Transverse colon (tissue), 4 donors: ENCODE measurements at regions of chr2 and their contacts with region 1.

Region 1: DNA sequence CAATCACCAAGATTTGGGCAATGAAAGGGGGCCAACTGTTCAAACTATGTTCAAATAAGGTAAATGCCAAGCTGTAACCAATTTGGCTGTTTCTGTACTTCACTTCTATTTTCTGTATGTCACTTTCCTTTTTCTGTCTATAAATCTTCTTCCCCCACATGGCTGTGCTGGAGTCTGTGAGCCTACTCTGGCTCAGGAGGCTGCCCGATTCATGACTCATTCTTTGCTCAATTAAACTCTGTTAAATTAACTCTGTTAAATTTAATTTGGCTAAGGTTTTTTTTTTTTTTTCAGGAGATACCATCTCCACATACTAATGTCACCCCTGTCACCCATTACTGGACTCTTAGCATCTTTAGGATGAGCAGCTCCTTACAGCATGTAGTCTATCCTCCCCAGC is 178.8 kb upstream of the TWIST2 start:
- DNase-seq: no peak
- H3K4me3 ChIP-seq: no peak overlapping the region
- H3K27ac ChIP-seq: no peak overlapping the region
- H3K4me1 ChIP-seq: no peaks in the 10 kb centered on the region
- H3K27me3 ChIP-seq: no peaks in the 10 kb centered on the region
- CTCF ChIP-seq: no peak
- EP300 ChIP-seq: no peak
- POLR2A ChIP-seq: no peak

Region 2: GRCh38 chr2:238649936-238650518 is 19.0 kb before region 1 on chr2:
- in situ Hi-C with region 1: no loop called
- intact Hi-C with region 1: loop called (anchors 1 kb)
- DNase-seq: no peak
- H3K4me3 ChIP-seq: no peak overlapping the region
- H3K27ac ChIP-seq: no peak overlapping the region
- H3K4me1 ChIP-seq: peaks cover 0 to 8% (median 0%) of the 10 kb centered on the region in 4 donors
- H3K27me3 ChIP-seq: no peaks in the 10 kb centered on the region
- CTCF ChIP-seq: no peak
- EP300 ChIP-seq: no peak
- POLR2A ChIP-seq: no peak